ENCODE measurements at regions of chr12 and their contacts with region 1.

Region 1: DNA sequence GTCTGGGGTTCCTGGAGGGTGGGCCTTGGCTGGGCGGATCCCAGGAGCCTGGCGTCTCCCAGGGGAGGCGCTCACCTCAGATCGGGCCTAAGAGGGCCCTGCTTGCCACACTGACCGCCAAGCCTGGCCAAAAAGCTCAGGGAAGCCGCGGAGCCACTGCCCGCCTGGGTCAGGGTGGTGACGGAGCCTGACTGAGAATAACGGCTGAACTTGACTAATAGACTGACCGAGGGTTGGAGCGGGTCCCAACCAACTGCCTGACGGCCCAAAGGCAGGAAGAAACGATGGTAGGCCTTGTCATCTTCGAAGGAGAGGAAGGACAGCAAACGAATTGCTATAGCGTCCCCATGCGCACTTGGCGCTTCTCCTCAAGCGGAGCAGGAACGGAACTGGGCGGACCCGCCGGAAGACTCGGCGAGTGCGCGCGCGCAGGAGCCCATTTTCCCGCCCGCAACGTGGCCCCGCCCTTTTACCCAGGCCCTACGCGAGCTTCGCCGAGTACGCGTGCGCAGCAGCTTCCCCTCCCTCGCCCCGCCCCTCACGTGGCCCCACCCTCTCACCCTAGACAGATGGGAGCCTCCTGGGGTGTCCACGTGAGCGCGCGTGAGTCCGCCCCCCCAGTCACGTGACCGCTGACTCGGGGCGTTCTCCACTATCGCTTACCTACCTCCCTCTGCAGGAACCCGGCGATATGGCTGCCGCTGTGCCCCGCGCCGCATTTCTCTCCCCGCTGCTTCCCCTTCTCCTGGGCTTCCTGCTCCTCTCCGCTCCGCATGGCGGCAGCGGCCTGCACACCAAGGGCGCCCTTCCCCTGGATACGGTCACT is at the starts of genes ERP29 and TMEM116:
- DNase-seq: peak; percentile 98 to 100 (median 100)
- ATAC-seq: peak; percentile 83 to 89 (median 87)
- H3K4me3 ChIP-seq: peak within 1 kb of the TSS; percentile 55 to 77
- H3K4me3 Mint-ChIP-seq: peak within 1 kb of the TSS; percentile 89 to 95 (median 94)
- H3K27ac ChIP-seq: peak within 1 kb of the TSS; percentile 98
- H3K27ac Mint-ChIP-seq: peak within 1 kb of the TSS; percentile 99
- H3K4me1 ChIP-seq: peaks cover 15 to 62% of the 10 kb centered on the region in 2 experiments
- H3K4me1 Mint-ChIP-seq: peaks cover 57 to 68% (median 63%) of the 10 kb centered on the region in 3 donors
- H3K27me3 ChIP-seq: no peaks in the 10 kb centered on the region
- H3K27me3 Mint-ChIP-seq: no peaks in the 10 kb centered on the region
- total RNA-seq, gene ERP29: 114 to 175 (median 158) TPM
- total RNA-seq, gene TMEM116: 16.0 to 27.2 (median 25.8) TPM

Region 2: GRCh38 chr12:111636209-111636945 is 376.6 kb before region 1 on chr12:
- CTCF ChIA-PET with region 1: no interaction called
- POLR2A ChIA-PET with region 1: no interaction called
- DNase-seq: no peak
- ATAC-seq: no peak
- H3K4me3 ChIP-seq: no peak overlapping the region
- H3K4me3 Mint-ChIP-seq: no peak overlapping the region
- H3K27ac ChIP-seq: no peak overlapping the region
- H3K27ac Mint-ChIP-seq: no peak overlapping the region
- H3K4me1 ChIP-seq: no peaks in the 10 kb centered on the region
- H3K4me1 Mint-ChIP-seq: no peaks in the 10 kb centered on the region
- H3K27me3 ChIP-seq: no peaks in the 10 kb centered on the region
- H3K27me3 Mint-ChIP-seq: no peaks in the 10 kb centered on the region

Region 3: DNA sequence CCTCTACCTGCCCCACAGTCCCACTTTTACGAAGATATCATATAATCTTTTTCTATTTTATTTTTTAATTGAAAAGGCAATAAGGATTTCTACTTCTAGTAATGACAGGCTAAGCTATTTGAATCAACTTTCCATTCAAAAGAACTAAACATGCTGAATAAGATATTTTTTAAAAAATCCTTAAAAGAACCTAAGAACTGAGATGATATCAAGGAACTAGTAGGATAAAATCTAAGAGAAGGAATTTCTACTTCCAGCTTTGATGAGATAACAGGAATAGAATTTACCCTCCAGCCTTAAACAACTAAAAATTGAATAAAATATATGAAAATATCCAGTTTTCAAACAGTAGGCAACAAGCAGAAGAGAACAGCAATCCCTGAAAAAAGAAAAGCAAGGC is 69.1 kb before region 1 on chr12:
- CTCF ChIA-PET with region 1: interaction called, 7 to 60 read pairs
- POLR2A ChIA-PET with region 1: interaction called, 3 to 9 read pairs
- DNase-seq: no peak
- ATAC-seq: no peak
- H3K4me3 ChIP-seq: no peak overlapping the region
- H3K4me3 Mint-ChIP-seq: no peak overlapping the region
- H3K27ac ChIP-seq: no peak overlapping the region
- H3K27ac Mint-ChIP-seq: no peak overlapping the region
- H3K4me1 ChIP-seq: peaks cover 5 to 16% of the 10 kb centered on the region in 2 experiments
- H3K4me1 Mint-ChIP-seq: peaks cover 17 to 23% (median 22%) of the 10 kb centered on the region in 3 donors
- H3K27me3 ChIP-seq: no peaks in the 10 kb centered on the region
- H3K27me3 Mint-ChIP-seq: no peaks in the 10 kb centered on the region

Region 4: GRCh38 chr12:111993292-111994150 is 19.5 kb before region 1 on chr12:
- CTCF ChIA-PET with region 1: interaction called, 3 to 22 read pairs
- POLR2A ChIA-PET with region 1: interaction called, 4 to 13 read pairs
- DNase-seq: peak in 22 of 35 experiments; percentile 13 to 67 (median 28)
- ATAC-seq: peak; percentile 84 to 88 (median 86)
- H3K4me3 ChIP-seq: peak overlapping the region; percentile 52 to 62
- H3K4me3 Mint-ChIP-seq: peak overlapping the region; percentile 82 to 88 (median 83)
- H3K27ac ChIP-seq: peak overlapping the region; percentile 61
- H3K27ac Mint-ChIP-seq: peak overlapping the region; percentile 97 to 98
- H3K4me1 ChIP-seq: peaks cover 39 to 57% of the 10 kb centered on the region in 2 experiments
- H3K4me1 Mint-ChIP-seq: peaks cover 75 to 86% (median 83%) of the 10 kb centered on the region in 3 donors
- H3K27me3 ChIP-seq: no peaks in the 10 kb centered on the region
- H3K27me3 Mint-ChIP-seq: no peaks in the 10 kb centered on the region

Region 5: GRCh38 chr12:112025808-112026375 is 12.9 kb after region 1 on chr12:
- CTCF ChIA-PET with region 1: interaction called, 3 to 21 read pairs
- POLR2A ChIA-PET with region 1: interaction called in 1 of 2 experiments, 5 read pairs
- DNase-seq: no peak
- ATAC-seq: peak in 1 of 4 experiments; percentile 40
- H3K4me3 ChIP-seq: no peak overlapping the region
- H3K4me3 Mint-ChIP-seq: no peak overlapping the region
- H3K27ac ChIP-seq: peak overlapping the region; percentile 25
- H3K27ac Mint-ChIP-seq: peak overlapping the region; percentile 74 to 75
- H3K4me1 ChIP-seq: peaks cover 2 to 11% of the 10 kb centered on the region in 2 experiments
- H3K4me1 Mint-ChIP-seq: peaks cover 22 to 32% (median 30%) of the 10 kb centered on the region in 3 donors
- H3K27me3 ChIP-seq: no peaks in the 10 kb centered on the region
- H3K27me3 Mint-ChIP-seq: no peaks in the 10 kb centered on the region

Region 6: GRCh38 chr12:112096070-112096469 is 83.1 kb after region 1 on chr12:
- CTCF ChIA-PET with region 1: no interaction called
- POLR2A ChIA-PET with region 1: no interaction called
- DNase-seq: no peak
- ATAC-seq: no peak
- H3K4me3 ChIP-seq: no peak overlapping the region
- H3K4me3 Mint-ChIP-seq: no peak overlapping the region
- H3K27ac ChIP-seq: no peak overlapping the region
- H3K27ac Mint-ChIP-seq: peak overlapping the region in 1 of 2 donors; percentile 76
- H3K4me1 ChIP-seq: no peaks in the 10 kb centered on the region
- H3K4me1 Mint-ChIP-seq: peaks cover 28 to 34% (median 32%) of the 10 kb centered on the region in 3 donors
- H3K27me3 ChIP-seq: no peaks in the 10 kb centered on the region
- H3K27me3 Mint-ChIP-seq: no peaks in the 10 kb centered on the region

Region 7: DNA sequence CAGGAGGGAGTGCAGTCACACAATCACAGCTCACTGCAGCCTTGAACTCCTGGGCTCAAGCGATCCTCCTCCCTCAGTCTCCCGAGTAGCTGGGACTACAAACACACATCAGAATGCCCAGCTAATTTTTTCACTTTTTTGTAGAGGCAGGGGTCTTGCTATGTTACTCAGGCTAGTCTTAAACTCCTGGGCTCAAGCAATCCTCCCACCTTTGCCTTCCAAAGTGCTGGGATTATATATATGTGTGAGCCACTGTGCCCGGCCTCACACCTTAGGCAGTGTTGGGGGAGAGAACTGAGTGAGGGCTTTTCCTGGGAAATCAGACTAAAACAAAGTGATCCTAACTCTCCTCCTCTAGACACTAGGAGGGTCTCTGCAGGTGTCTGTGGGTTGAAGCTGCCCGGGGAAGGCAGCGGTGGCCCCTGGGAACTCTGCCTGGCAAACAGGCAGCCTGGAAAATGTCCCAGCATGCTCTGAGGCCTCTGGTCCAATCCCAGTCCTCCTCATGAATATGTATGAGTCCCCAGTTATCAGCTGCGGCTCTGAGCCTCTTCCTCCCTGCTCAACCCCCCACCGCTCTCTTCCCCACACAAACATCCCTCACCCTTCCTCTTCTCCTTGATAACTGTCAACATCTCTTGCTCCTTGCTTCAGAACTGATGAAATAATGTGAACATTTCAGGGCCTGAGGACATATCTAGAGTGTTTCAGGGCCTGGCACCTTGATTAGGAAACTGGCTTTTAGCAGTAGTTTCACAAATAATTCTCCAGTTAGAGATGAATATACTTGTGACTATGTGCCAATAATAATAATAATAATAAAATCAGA is 103.5 kb after region 1 on chr12:
- CTCF ChIA-PET with region 1: no interaction called
- POLR2A ChIA-PET with region 1: no interaction called
- DNase-seq: peak in 1 of 35 experiments; percentile 26
- ATAC-seq: peak in 2 of 4 experiments; percentile 46 to 83
- H3K4me3 ChIP-seq: no peak overlapping the region
- H3K4me3 Mint-ChIP-seq: peak overlapping the region in 1 of 3 donors; percentile 44
- H3K27ac ChIP-seq: no peak overlapping the region
- H3K27ac Mint-ChIP-seq: peak overlapping the region; percentile 17 to 62
- H3K4me1 ChIP-seq: peaks cover 5% of the 10 kb centered on the region in 2 experiments
- H3K4me1 Mint-ChIP-seq: peaks cover 4 to 11% (median 6%) of the 10 kb centered on the region in 3 donors
- H3K27me3 ChIP-seq: peaks cover 0 to 5% of the 10 kb centered on the region in 2 experiments
- H3K27me3 Mint-ChIP-seq: no peaks in the 10 kb centered on the region

Region 8: GRCh38 chr12:112393328-112393727 is 380.3 kb after region 1 on chr12:
- CTCF ChIA-PET with region 1: no interaction called
- POLR2A ChIA-PET with region 1: no interaction called
- DNase-seq: no peak
- ATAC-seq: no peak
- H3K4me3 ChIP-seq: no peak overlapping the region
- H3K4me3 Mint-ChIP-seq: no peak overlapping the region
- H3K27ac ChIP-seq: no peak overlapping the region
- H3K27ac Mint-ChIP-seq: no peak overlapping the region
- H3K4me1 ChIP-seq: no peaks in the 10 kb centered on the region
- H3K4me1 Mint-ChIP-seq: no peaks in the 10 kb centered on the region
- H3K27me3 ChIP-seq: no peaks in the 10 kb centered on the region
- H3K27me3 Mint-ChIP-seq: no peaks in the 10 kb centered on the region